ENCODE measurements at regions of chr7 and their contacts with region 1.

Region 1: GRCh38 chr7:82234457-82235049 is 209.0 kb downstream of the CACNA2D1 start:
- DNase-seq: peak; percentile 78
- H3K4me3 ChIP-seq: no peak overlapping the region
- H3K27ac ChIP-seq: no peak overlapping the region
- H3K4me1 ChIP-seq: peaks cover 49% of the 10 kb centered on the region
- H3K27me3 ChIP-seq: no peaks in the 10 kb centered on the region
- CTCF ChIP-seq: peak; percentile 80

Region 2: DNA sequence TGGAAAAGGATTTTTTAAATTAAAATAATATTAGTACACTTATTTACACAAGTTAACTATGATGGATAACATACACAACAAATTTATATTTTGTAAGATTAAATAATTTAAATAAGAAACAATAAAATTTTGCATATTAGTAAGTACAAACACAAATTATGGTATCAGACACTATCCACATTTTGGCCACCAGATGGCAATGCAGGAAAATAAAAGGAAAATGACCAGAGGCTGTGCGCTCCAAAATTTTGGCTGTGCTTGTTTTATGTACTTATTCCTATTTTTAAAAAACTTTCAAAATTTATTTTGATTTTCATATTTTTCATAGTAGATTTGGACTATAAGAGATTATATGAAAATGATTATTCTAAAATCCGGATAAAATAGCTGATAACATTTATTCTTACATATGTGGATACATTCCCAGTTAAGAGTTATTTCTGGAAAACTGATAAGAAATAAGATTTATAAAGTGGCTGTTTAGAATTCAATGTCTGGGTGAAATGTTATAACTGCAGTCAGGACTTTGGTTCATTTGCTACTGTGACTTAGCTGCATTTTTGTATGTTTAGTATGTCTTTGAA is 190.0 kb before region 1 on chr7:
- CTCF ChIA-PET with region 1: no interaction called
- POLR2A ChIA-PET with region 1: no interaction called
- intact Hi-C with region 1: loop called (anchors 2 kb)
- DNase-seq: peak; percentile 70
- H3K4me3 ChIP-seq: no peak overlapping the region
- H3K27ac ChIP-seq: no peak overlapping the region
- H3K4me1 ChIP-seq: peaks cover 17% of the 10 kb centered on the region
- H3K27me3 ChIP-seq: no peaks in the 10 kb centered on the region
- CTCF ChIP-seq: peak; percentile 76

Region 3: DNA sequence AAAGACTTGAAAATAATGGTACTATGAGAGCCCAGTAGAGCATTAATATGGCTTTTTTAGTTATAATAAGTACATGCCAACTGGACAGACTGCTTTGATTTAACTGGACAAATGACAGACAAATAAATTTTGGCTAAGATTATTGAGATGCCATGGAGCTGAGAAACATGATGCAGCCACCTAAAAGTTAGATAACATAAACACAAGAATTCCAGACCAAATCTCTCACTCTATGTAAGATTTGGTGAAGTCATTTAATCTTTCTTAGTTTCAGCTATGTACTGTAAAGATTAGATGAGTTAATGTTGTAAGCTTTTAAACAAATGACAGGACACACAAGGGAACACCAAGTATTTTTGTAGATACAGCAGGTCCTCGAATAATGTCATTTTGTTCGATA is 90.9 kb after region 1 on chr7:
- CTCF ChIA-PET with region 1: no interaction called
- POLR2A ChIA-PET with region 1: no interaction called
- intact Hi-C with region 1: no loop called
- DNase-seq: no peak
- H3K4me3 ChIP-seq: no peak overlapping the region
- H3K27ac ChIP-seq: no peak overlapping the region
- H3K4me1 ChIP-seq: peaks cover 3% of the 10 kb centered on the region
- H3K27me3 ChIP-seq: no peaks in the 10 kb centered on the region
- CTCF ChIP-seq: no peak

Region 4: DNA sequence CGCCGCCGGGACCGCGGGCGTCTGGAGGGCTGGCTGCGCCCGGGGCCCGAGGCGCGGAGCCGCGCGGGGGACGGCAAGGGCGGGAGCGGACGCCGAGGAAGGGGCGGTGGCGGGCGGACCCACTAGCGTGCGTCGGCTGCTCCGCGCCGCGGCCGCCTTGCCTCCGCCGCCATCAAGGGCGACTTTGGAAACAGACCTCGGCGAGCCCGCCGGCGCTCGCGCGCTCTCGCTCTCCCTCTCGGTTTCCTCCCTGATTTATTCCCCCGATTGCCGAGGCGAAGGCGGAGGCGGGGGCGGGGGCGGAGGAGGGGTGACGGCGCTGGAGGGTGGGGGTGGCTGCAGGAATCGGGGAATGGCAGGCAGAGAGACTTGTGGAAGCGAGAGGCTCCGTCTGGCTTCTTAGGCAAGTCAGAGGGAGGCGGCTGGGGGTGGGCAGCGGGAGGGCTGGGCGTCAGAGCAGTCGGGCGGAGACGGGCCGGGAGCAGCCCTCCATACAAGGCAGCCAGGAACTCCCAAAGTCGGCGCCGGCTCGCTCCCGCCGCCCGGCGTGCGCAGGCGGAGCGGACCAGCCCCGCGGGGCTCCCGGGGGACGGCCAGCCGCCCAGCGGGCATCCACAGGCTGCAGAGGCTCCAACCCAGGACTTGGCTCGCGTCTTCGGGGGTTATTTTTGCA is 209.1 kb after region 1 on chr7 and contains the start of gene CACNA2D1:
- CTCF ChIA-PET with region 1: no interaction called
- POLR2A ChIA-PET with region 1: interaction called, 4 read pairs
- intact Hi-C with region 1: loop called (anchors 5 kb)
- DNase-seq: peak; percentile 95
- H3K4me3 ChIP-seq: peak within 1 kb of the TSS; percentile 90
- H3K27ac ChIP-seq: peak within 1 kb of the TSS; percentile 98
- H3K4me1 ChIP-seq: peaks cover 34% of the 10 kb centered on the region
- H3K27me3 ChIP-seq: no peaks in the 10 kb centered on the region
- CTCF ChIP-seq: no peak
- total RNA-seq, gene CACNA2D1: 47.7 and 49.1 TPM in 2 replicates

Region 5: GRCh38 chr7:82481499-82482097 is 247.0 kb after region 1 on chr7:
- CTCF ChIA-PET with region 1: no interaction called
- POLR2A ChIA-PET with region 1: no interaction called
- intact Hi-C with region 1: loop called (anchors 5 kb)
- DNase-seq: peak; percentile 40
- H3K4me3 ChIP-seq: no peak overlapping the region
- H3K27ac ChIP-seq: no peak overlapping the region
- H3K4me1 ChIP-seq: no peaks in the 10 kb centered on the region
- H3K27me3 ChIP-seq: no peaks in the 10 kb centered on the region
- CTCF ChIP-seq: peak; percentile 84

Region 6: DNA sequence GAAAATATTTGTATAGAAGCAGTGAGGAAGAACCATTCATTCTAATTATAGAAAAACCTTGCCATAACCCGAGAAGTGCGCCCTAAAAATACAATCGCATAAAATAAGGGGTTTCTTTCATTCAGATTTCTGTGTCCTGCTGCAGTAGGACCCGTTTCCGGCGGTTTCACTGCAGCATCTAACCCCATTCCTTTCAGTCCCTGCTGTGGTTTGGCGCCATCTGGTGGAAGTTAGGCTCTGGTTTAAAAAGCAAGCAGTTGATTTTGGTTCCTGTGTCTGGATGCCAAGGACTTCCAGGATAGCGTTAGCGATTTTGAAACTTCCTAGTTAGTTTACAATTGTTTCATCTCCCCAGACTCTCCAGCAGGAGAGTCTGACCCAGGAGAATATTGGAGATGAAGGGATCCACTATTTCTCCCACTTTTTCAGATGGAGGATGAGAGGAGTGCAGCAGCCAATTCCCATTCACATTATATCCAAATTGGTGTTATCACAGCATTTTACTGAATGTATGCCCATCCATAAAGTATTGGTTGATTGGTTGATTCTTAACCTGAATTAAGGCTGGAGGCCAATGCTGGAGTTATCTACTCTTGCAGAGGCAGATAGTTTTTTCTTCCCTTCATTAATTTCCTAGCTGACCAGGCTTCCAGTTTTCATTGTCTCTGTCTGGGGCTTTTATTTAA is 337.8 kb after region 1 on chr7:
- CTCF ChIA-PET with region 1: interaction called, 4 read pairs
- POLR2A ChIA-PET with region 1: no interaction called
- intact Hi-C with region 1: loop called (anchors 2 kb)
- DNase-seq: peak; percentile 92
- H3K4me3 ChIP-seq: peak overlapping the region; percentile 20
- H3K27ac ChIP-seq: no peak overlapping the region
- H3K4me1 ChIP-seq: peaks cover 5% of the 10 kb centered on the region
- H3K27me3 ChIP-seq: no peaks in the 10 kb centered on the region
- CTCF ChIP-seq: peak; percentile 95

Region 7: GRCh38 chr7:82605247-82605872 is 370.8 kb after region 1 on chr7:
- CTCF ChIA-PET with region 1: interaction called, 3 read pairs
- POLR2A ChIA-PET with region 1: no interaction called
- intact Hi-C with region 1: loop called (anchors 2 kb)
- DNase-seq: peak; percentile 74
- H3K4me3 ChIP-seq: no peak overlapping the region
- H3K27ac ChIP-seq: no peak overlapping the region
- H3K4me1 ChIP-seq: peaks cover 4% of the 10 kb centered on the region
- H3K27me3 ChIP-seq: no peaks in the 10 kb centered on the region
- CTCF ChIP-seq: peak; percentile 84

Region 8: GRCh38 chr7:83365746-83366145 is 1131.2 kb after region 1 on chr7:
- CTCF ChIA-PET with region 1: no interaction called
- POLR2A ChIA-PET with region 1: no interaction called
- intact Hi-C with region 1: no loop called
- DNase-seq: peak; percentile 2
- H3K4me3 ChIP-seq: no peak overlapping the region
- H3K27ac ChIP-seq: no peak overlapping the region
- H3K4me1 ChIP-seq: no peaks in the 10 kb centered on the region
- H3K27me3 ChIP-seq: peaks cover 7% of the 10 kb centered on the region
- CTCF ChIP-seq: no peak; the same call in 1 of the 2 replicates

Measured in A673 (cell line).